ENCODE measurements at regions of chr4 and their contacts with region 1.

Region 1: GRCh38 chr4:16205298-16206164 is 20.7 kb downstream of the TAPT1 start:
- DNase-seq: no peak
- ATAC-seq: peak; percentile 82
- H3K4me3 Mint-ChIP-seq: no peak overlapping the region
- H3K27ac Mint-ChIP-seq: no peak overlapping the region
- H3K4me1 Mint-ChIP-seq: peaks cover 26% of the 10 kb centered on the region
- H3K27me3 Mint-ChIP-seq: no peaks in the 10 kb centered on the region

Region 2: DNA sequence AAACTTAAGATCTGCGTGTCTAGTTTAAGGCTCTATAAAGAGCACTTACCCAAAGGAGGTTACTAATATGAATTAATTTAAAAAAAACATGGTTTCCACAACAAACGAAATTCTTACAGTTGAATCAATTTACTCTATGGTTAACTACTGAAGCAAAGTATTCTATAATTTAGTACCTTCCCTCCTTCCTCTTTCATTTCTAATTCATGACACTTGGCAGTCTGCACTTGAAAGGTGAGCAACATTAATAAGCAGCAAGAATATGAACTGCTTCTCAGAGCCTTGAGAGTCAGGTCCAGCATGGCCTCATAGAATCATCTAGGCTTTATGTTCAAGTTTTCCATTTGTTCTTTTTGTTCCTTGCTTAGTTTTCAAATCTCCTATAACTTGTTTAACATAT is 21.9 kb before region 1 on chr4:
- CTCF ChIA-PET with region 1: interaction called, 14 read pairs
- POLR2A ChIA-PET with region 1: interaction called, 3 read pairs
- DNase-seq: no peak
- ATAC-seq: no peak
- H3K4me3 Mint-ChIP-seq: no peak overlapping the region
- H3K27ac Mint-ChIP-seq: no peak overlapping the region
- H3K4me1 Mint-ChIP-seq: no peaks in the 10 kb centered on the region
- H3K27me3 Mint-ChIP-seq: no peaks in the 10 kb centered on the region

Region 3: DNA sequence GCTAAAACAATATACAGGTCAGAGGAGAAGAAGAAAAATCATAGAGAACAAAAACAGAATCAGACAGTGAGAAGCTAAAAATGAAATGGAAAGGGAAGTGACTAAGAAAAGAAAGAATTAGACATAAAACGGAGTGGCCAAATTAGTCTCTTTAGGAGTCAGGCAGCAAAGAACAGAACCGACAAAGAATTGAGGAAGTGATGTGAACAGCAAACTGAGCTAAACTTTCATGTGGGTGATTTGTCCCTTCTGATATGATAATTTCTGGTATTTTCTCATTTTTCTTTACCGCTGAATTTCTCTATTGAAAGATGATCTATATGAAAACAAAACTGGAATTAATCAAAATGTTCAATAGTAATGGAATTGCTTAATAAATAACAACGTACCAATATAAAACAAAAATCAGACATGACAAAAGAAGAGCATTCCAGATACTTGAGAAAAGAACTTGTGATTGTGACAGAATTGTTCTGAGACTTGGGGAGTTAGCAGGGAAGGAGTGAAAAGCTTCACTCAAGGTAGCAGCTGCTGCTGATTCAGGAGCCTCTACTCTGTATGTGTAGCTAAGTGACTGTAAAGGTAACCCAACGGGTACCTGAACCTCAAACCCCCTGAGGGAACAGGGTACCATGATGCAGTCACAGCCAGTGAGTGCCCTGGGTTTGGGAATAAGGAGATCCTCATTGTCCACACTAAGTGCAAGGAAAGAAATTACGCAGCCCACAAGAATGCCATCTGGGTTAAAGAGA is 11.9 kb after region 1 on chr4:
- CTCF ChIA-PET with region 1: interaction called, 31 read pairs
- POLR2A ChIA-PET with region 1: no interaction called
- DNase-seq: no peak
- ATAC-seq: no peak
- H3K4me3 Mint-ChIP-seq: peak overlapping the region; percentile 3
- H3K27ac Mint-ChIP-seq: peak overlapping the region; percentile 7
- H3K4me1 Mint-ChIP-seq: peaks cover 55% of the 10 kb centered on the region
- H3K27me3 Mint-ChIP-seq: no peaks in the 10 kb centered on the region

Measured in activated CD8-positive, alpha-beta T cell treated with anti-CD3 and anti-CD28 coated beads, Interleukin-2, amount 10 ng/mL, durations not matched to agents 7 days and 5 days (primary cell).